Lower leg skin (tissue), 4 donors: ENCODE measurements at regions of chr18 and their contacts with region 1.

Region 1: DNA sequence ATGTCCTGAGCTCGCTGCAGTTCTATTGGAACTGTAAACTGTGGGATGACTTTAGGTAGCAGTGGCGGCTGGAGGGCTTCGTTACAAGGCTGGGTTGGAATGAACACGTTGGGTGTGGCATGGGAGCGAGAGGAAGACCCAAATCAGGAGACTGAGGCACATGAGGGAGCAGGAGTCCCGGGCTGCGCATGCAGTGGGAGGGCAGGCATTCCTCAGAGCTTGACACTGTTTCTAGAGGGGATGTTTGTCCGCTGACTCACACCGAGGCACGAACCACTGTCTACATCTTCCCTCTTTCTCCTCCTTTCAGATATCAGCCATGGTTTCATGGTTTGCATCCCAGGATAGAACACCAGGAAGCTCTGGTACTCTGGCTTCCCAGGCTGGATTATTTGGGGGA is 40.6 kb upstream of the LAMA1 start:
- DNase-seq: peak in 1 of 2 donors; percentile 62
- H3K4me3 ChIP-seq: no peak overlapping the region
- CTCF ChIP-seq: no peak
- POLR2A ChIP-seq: no peak

Region 2: DNA sequence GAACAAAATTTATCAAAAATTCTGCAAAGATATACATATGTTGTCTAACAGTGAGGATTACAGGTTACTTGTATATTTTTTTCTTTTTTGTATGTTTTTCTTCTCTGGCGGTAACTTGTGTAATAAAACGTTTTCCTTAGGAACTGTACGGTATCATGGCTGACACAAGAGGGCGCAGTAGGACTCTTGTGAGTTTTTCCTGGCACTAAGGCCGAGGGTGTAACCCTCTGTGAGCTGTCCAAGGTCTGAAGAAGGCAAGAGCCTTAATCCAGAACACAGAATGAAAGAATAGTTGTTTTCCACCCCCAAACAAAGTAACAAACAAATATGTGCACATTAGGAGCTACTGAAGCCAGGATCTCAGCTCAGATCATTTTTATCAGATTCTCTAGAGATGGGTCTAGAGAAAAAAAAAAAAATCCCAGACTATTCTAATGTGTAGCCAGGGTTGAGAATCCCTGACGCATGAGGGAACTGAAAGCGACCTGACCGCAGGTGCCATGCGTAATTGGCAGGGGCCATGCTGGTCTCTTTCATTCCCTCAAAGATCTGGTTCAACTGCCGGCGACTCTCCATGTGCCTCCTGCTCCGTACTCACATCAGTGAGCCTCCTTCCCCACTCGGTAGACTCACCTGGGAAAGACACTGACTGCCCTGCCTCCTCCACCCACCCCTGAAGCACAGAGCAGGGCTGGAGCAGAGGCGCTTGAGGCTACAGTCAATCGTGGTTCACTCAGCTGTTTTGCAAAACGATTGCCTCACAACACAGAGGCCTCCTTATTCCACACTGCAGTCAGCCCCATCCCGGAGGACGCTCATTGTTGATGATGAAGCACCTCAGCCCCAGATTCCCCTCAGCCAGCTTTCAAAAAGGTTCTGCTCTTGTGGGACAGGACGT is 1289.7 kb before region 1 on chr18:
- intact Hi-C with region 1: loop called (anchors 5 kb)
- DNase-seq: peak; percentile 59 to 87
- H3K4me3 ChIP-seq: no peak overlapping the region
- CTCF ChIP-seq: no peak
- POLR2A ChIP-seq: no peak

Region 3: GRCh38 chr18:6648581-6648980 is 509.6 kb before region 1 on chr18:
- intact Hi-C with region 1: no loop called
- DNase-seq: no peak
- H3K4me3 ChIP-seq: no peak overlapping the region
- CTCF ChIP-seq: no peak
- POLR2A ChIP-seq: no peak

Region 4: DNA sequence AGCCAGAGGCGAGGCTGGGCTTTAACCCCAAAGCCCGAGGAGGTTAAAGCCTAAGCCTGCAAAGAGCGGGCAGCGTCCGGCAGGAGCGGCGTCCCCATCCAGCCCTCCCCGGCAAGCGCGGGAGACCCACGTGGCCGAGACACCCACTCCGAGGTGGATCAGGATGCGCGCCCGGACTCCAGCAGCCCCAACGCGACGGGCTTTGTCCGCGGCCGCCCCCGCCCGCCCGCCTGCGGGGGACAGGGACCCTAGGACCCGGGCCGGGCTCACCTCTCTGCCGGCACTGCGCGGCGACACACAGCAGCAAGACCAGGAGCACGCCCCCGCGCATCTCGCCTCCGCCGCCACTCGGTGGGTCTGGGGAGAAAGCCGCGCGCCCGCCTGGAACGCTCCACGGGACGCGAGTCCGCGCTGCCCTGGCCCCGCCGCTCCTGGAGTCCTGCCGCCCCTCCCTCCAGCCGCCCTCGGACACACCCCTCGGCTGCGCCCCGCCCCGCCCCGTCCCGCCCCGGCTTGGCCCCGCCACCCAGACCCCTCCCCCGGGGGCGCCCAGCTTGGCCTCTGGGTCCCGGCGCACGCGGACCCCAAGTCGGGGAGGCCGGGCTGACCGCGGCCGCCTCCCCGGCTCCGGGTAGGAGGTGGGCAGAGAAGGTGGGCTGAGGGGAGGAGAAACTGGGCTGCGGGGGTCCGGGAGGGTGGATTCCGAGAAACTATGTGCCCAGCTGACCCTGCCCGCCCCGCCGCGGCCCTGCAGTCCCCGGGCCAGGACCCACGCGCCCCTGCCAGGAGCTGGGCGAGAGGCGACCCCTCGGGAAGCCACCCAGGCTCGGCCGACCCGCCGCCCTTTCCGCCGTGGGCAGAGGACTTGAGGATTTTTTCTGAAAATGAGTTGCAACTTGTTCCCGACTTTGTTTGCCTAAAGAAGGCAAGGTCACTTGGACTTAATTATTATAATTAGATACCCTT is 40.5 kb before region 1 on chr18 and contains the start of gene LAMA1:
- intact Hi-C with region 1: no loop called
- DNase-seq: peak in 1 of 2 donors; percentile 85
- H3K4me3 ChIP-seq: peak within 1 kb of the TSS; percentile 12
- CTCF ChIP-seq: no peak
- POLR2A ChIP-seq: no peak
- total RNA-seq, gene LAMA1: 0.17 to 1.7 (median 0.61) TPM

Region 5: GRCh38 chr18:7233134-7233810 is 75.1 kb after region 1 on chr18:
- intact Hi-C with region 1: no loop called
- DNase-seq: no peak
- H3K4me3 ChIP-seq: no peak overlapping the region
- CTCF ChIP-seq: no peak
- POLR2A ChIP-seq: no peak

Region 6: DNA sequence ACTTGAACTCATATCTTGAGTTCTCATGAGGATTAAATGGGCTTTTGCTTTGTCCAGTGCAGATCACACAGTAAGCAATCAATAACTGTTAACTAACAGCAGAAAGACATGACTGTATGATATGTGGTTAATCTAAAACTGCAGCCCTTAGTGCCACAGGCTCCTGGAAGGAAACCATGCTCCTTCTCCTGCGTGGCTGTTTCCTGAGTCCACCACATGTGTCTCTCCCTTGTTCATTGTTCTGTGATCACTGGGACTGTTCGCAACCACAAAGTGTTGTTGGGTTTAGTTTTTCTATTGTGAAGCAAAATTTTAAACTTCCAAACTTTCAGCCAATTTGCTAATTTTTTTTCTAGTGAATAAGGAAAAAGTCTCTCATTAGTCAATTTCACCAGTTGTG is 277.9 kb after region 1 on chr18:
- intact Hi-C with region 1: no loop called
- DNase-seq: no peak
- H3K4me3 ChIP-seq: no peak overlapping the region
- CTCF ChIP-seq: no peak
- POLR2A ChIP-seq: no peak